ENCODE measurements at regions of chr10 and their contacts with region 1.

Region 1: DNA sequence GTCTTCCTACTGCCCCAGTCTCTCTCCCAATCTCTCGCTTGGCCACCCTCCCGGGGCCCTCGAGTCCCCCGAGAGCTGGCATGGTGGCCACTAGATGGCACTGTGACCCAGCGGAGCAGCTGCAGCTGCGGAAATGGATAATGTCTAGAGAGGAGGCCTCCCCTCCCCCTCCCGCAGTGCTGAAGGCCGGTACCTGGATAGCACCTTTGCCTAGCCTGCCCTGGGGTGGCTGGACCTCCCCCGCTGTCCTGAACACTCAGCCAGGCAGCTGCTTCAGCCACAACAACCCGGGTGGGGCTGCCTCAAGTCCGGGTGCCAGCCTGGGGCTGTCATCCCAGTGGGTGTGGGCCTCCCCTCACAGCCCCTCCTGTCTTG is 65.2 kb downstream of the GOLGA7B start:
- DNase-seq: peak; percentile 71
- H3K4me3 ChIP-seq: no peak overlapping the region
- H3K27ac ChIP-seq: no peak overlapping the region
- H3K4me1 ChIP-seq: no peaks in the 10 kb centered on the region
- H3K27me3 ChIP-seq: peaks cover 54% of the 10 kb centered on the region

Region 2: DNA sequence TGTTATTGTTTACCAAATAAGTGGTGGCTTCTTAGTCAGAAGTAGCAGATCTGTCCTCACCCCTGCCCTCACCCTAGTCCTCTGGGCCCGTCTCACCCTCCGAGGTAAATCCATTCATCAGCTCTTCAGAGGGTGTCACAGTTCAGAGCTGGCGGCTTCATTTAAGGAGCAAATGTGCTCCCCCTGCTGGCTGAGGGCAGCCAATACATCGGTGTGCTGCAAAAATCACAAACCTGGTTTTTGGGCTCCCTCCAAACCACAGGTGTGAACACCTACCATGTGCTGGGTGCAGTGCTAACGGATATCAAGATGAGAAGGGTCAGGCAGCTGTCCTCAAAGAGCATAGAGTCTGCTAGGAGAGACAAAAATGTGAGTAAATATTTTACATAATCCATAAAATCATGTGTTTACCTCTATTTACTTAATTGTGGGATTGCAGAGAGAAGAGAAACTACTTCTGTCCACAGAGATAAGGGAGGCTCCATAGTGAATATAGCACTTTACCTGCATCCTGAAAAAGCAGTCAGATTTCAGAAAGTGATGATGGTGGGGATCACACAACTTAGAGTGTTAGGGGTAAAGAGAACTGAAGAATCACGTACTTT is 131.1 kb after region 1 on chr10:
- in situ Hi-C with region 1: loop called (anchors 10 kb)
- DNase-seq: peak; percentile 68
- H3K4me3 ChIP-seq: no peak overlapping the region
- H3K27ac ChIP-seq: no peak overlapping the region
- H3K4me1 ChIP-seq: no peaks in the 10 kb centered on the region
- H3K27me3 ChIP-seq: peaks cover 34% of the 10 kb centered on the region